Cardiac septum (tissue), 1 donor: ENCODE measurements at regions of chr19 and their contacts with region 1.

Region 1: GRCh38 chr19:47790398-47790814 is 11.9 kb downstream of the SELENOW start:
- DNase-seq: peak; percentile 89

Region 2: DNA sequence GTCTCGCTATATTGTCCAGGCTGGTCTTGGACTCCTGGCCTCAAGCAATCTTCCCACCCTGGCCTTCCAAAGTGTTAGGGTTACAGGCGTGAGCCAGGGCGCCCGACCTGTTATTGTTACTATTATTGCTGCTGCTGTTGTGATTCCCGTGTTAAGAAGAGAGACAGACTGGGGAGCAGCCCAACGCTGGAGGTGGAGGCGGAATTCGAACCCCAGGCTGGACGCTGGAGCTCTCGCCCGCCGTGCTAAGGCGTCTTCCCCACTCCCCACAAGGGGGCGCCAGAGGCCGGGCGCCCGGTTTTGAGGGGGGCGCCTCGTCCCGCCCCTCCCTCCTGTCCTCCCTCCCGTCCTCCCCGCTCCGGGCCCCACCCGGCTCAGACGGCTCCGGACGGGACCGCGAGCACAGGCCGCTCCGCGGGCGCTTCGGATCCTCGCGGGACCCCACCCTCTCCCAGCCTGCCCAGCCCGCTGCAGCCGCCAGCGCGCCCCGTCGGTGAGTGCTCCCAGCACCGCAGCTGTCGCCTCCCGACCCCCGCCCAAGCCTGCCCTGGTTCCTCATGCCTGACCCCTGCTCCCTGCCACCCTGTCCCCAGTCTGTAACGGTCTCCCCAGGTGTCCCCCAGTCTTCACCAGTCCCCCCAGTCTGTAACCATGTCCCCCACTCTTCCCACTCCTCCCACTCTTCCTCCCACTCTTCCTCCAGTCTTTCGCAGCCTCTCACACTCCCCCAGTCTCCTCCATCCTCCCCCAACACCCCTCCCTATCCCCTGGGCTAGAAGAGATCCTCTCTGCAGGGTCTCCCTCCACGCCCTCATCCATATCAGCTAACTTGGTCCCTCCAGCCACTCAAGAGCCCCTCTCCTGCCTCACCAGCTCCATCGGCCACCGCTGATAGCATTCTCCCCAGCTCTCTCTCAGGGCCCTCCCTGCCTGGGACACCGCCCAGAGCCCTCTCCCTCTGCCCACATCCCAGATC is 77.1 kb before region 1 on chr19 and contains the start of gene EHD2:
- intact Hi-C with region 1: loop called (anchors 1 kb)
- DNase-seq: peak; percentile 80
- total RNA-seq, gene EHD2: 42.6 TPM

Region 3: DNA sequence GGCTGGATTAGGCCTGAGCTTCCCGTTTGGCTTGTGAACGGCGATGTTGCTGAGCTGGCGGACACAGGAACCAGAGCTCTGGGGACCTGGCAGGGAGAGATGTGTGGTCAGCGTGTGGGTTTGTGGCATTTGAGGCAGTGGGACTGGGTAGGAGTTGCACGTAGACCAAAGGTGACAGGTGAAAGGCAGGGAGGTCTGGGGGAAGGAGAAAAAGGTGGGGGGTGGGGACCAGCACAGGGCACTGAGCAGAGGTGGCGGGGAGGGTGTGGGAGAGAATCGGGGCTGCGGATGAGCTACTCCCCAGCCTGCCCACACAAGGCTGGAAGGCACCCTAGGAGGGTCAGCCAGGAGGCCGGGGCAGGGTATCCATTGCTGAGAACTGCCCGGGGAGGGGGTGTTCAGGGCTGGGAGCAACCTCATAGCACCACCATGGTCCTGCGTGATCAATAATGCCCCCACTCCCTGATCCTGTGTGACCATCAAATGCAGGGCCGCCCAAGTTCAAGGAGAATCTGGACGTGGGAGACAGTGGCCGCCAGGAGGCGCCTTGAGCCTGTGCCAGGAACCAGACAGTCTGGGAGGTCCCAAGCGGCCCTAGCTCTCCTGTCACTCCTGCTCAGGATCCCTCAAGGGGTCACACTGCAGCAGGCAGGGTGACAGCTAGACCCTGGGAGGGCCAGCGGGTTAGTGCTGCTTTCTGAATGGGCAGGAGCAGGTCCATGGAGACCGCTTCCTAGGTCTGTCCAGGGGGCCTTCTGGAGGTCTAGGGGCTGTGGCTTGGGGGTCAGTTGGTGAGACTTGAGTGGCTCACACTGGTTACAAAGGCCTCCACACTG is 24.7 kb before region 1 on chr19:
- intact Hi-C with region 1: loop called (anchors 1 kb)
- DNase-seq: no peak